Naive thymus-derived CD4-positive, alpha-beta T cell (primary cell): ENCODE measurements at regions of chr7 and their contacts with region 1.

Region 1: DNA sequence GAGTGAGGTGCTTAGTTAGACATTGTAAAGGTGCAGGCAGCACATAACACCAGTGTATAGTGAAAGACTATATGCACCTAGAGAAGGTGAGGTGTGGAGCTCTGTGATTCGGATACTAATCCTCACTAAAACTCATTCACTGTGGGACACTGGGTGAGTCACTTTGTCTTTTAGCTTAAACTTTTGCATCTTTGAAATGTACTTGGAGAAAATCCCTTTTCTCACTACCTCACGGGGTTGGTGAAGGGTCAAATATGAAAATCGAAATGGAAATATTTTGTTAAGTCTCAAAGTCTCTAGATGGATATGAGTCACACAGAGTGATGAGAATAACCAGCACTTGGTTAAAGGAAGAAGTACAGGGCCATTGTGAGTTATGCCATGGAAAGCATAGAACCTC is 38.0 kb downstream of the MDFIC start:
- DNase-seq: no peak
- ATAC-seq: no peak
- H3K4me3 ChIP-seq: no peak overlapping the region
- H3K4me3 Mint-ChIP-seq: no peak overlapping the region
- H3K27ac ChIP-seq: no peak overlapping the region
- H3K27ac Mint-ChIP-seq: peak overlapping the region in 2 of 9 donors; percentile 47 to 56
- H3K4me1 ChIP-seq: peaks cover 6 to 39% of the 10 kb centered on the region in 2 donors
- H3K4me1 Mint-ChIP-seq: peaks cover 37 to 79% (median 58%) of the 10 kb centered on the region in 7 donors
- H3K27me3 ChIP-seq: no peaks in the 10 kb centered on the region
- H3K27me3 Mint-ChIP-seq: no peaks in the 10 kb centered on the region

Region 2: GRCh38 chr7:114944745-114945625 is 14.9 kb before region 1 on chr7:
- CTCF ChIA-PET with region 1: no interaction called
- POLR2A ChIA-PET with region 1: no interaction called
- intact Hi-C with region 1: loop called in 1 of 2 experiments (anchors 1 kb)
- DNase-seq: no peak
- ATAC-seq: no peak
- H3K4me3 ChIP-seq: no peak overlapping the region
- H3K4me3 Mint-ChIP-seq: no peak overlapping the region
- H3K27ac ChIP-seq: no peak overlapping the region
- H3K27ac Mint-ChIP-seq: no peak overlapping the region
- H3K4me1 ChIP-seq: peaks cover 31 to 46% of the 10 kb centered on the region in 2 donors
- H3K4me1 Mint-ChIP-seq: peaks cover 61 to 94% (median 72%) of the 10 kb centered on the region in 7 donors
- H3K27me3 ChIP-seq: no peaks in the 10 kb centered on the region
- H3K27me3 Mint-ChIP-seq: no peaks in the 10 kb centered on the region

Region 3: GRCh38 chr7:115135769-115136410 is 176.0 kb after region 1 on chr7:
- CTCF ChIA-PET with region 1: no interaction called
- POLR2A ChIA-PET with region 1: no interaction called
- intact Hi-C with region 1: no loop called
- DNase-seq: peak in 4 of 9 donors; percentile 2 to 21 (median 8)
- ATAC-seq: peak; percentile 55
- H3K4me3 ChIP-seq: no peak overlapping the region
- H3K4me3 Mint-ChIP-seq: peak overlapping the region in 5 of 10 donors; percentile 15 to 54 (median 38)
- H3K27ac ChIP-seq: no peak overlapping the region
- H3K27ac Mint-ChIP-seq: peak overlapping the region in 4 of 9 donors; percentile 14 to 48 (median 24)
- H3K4me1 ChIP-seq: peaks cover 7 to 12% of the 10 kb centered on the region in 2 donors
- H3K4me1 Mint-ChIP-seq: peaks cover 14 to 35% (median 29%) of the 10 kb centered on the region in 7 donors
- H3K27me3 ChIP-seq: no peaks in the 10 kb centered on the region
- H3K27me3 Mint-ChIP-seq: peaks cover 0 to 6% (median 0%) of the 10 kb centered on the region in 5 donors